Activated CD8-positive, alpha-beta T cell treated with anti-CD3 and anti-CD28 coated beads for 36 hours (primary cell): ENCODE measurements at regions of chr12 and their contacts with region 1.

Region 1: DNA sequence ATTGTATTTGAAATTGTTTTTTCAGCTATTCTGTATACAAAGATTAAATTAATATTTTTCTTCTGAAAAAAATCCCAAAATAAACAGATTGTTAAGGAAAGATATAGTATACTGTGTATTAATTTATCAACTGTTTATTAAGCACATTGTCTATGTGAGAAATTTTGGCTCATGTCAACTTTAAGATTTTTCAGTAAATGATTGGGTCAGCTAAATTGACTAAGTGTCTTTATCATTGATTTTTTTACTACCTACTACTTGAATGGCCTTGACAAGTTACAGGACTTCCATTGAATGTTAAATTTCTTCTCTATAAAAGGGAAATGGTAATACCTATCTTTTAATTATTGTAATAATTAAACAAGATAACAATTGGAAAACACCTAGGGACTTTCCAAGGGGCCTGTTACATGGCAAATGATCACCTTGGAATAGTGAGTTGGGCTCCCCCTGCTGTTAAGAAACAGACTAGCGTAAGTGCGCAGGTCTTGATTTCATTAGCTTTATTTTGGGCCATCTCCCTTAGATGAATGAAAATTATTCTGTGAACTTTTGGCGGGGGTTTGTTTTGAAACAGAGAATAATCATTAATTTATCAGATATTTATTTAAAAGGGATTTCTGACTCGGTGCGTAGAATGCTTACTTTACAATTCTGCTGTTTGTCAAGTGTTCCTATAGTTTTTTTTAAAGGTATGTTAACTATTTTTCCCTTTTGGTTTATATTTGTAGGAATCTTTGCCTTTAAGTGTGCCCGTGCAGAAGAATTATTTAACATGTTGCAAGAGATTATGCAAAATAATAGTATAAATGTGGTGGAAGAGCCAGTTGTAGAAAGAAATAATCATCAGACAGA is 14.5 kb upstream of the CCT2 start:
- DNase-seq: peak; percentile 73
- ATAC-seq: peak; percentile 83
- H3K4me3 Mint-ChIP-seq: no peak overlapping the region
- H3K27ac Mint-ChIP-seq: no peak overlapping the region
- H3K4me1 Mint-ChIP-seq: no peaks in the 10 kb centered on the region
- H3K27me3 Mint-ChIP-seq: no peaks in the 10 kb centered on the region
- CTCF ChIP-seq: peak; percentile 91

Region 2: GRCh38 chr12:69290545-69291277 is 280.1 kb before region 1 on chr12:
- CTCF ChIA-PET with region 1: interaction called, 16 read pairs
- POLR2A ChIA-PET with region 1: interaction called, 3 read pairs
- intact Hi-C with region 1: no loop called
- DNase-seq: peak; percentile 91
- ATAC-seq: peak; percentile 100
- H3K4me3 Mint-ChIP-seq: no peak overlapping the region
- H3K27ac Mint-ChIP-seq: no peak overlapping the region
- H3K4me1 Mint-ChIP-seq: peaks cover 5% of the 10 kb centered on the region
- H3K27me3 Mint-ChIP-seq: peaks cover 24% of the 10 kb centered on the region
- CTCF ChIP-seq: peak; percentile 97

Region 3: DNA sequence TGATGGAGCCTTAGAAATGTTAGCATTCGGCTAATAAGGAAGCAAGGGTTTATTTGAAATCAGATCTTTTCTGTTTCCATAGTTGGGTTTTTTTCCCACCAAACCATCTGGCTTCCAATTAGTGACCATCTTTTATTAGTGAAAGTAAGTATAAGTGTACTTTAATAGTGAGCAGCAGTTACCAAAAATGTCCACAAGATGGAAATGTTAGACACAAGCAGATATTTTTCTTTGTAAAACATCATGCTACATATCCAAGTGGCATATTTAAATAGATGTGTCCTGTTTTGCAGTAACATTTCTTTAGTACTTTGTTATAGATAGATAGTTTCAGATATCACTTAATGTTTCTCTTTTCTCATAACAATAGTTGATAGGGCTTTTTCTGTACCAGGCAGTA is 182.4 kb before region 1 on chr12:
- CTCF ChIA-PET with region 1: interaction called, 40 read pairs
- POLR2A ChIA-PET with region 1: no interaction called
- intact Hi-C with region 1: no loop called
- DNase-seq: no peak
- ATAC-seq: no peak
- H3K4me3 Mint-ChIP-seq: no peak overlapping the region
- H3K27ac Mint-ChIP-seq: no peak overlapping the region
- H3K4me1 Mint-ChIP-seq: peaks cover 8% of the 10 kb centered on the region
- H3K27me3 Mint-ChIP-seq: no peaks in the 10 kb centered on the region
- CTCF ChIP-seq: peak; percentile 25

Region 4: GRCh38 chr12:69484428-69484827 is 86.3 kb before region 1 on chr12:
- CTCF ChIA-PET with region 1: interaction called, 7 read pairs
- POLR2A ChIA-PET with region 1: no interaction called
- intact Hi-C with region 1: loop called (anchors 10 kb)
- DNase-seq: no peak
- ATAC-seq: no peak
- H3K4me3 Mint-ChIP-seq: no peak overlapping the region
- H3K27ac Mint-ChIP-seq: no peak overlapping the region
- H3K4me1 Mint-ChIP-seq: peaks cover 38% of the 10 kb centered on the region
- H3K27me3 Mint-ChIP-seq: no peaks in the 10 kb centered on the region
- CTCF ChIP-seq: no peak

Region 5: GRCh38 chr12:69585189-69586062 is 14.7 kb after region 1 on chr12 and contains the start of gene CCT2:
- CTCF ChIA-PET with region 1: interaction called, 78 read pairs
- POLR2A ChIA-PET with region 1: interaction called, 3 read pairs
- intact Hi-C with region 1: no loop called
- DNase-seq: peak; percentile 98
- ATAC-seq: peak; percentile 95
- H3K4me3 Mint-ChIP-seq: peak within 1 kb of the TSS; percentile 97
- H3K27ac Mint-ChIP-seq: peak within 1 kb of the TSS; percentile 96
- H3K4me1 Mint-ChIP-seq: peaks cover 27% of the 10 kb centered on the region
- H3K27me3 Mint-ChIP-seq: no peaks in the 10 kb centered on the region
- CTCF ChIP-seq: peak; percentile 48
- total RNA-seq, gene CCT2: 389 to 403 TPM

Region 6: DNA sequence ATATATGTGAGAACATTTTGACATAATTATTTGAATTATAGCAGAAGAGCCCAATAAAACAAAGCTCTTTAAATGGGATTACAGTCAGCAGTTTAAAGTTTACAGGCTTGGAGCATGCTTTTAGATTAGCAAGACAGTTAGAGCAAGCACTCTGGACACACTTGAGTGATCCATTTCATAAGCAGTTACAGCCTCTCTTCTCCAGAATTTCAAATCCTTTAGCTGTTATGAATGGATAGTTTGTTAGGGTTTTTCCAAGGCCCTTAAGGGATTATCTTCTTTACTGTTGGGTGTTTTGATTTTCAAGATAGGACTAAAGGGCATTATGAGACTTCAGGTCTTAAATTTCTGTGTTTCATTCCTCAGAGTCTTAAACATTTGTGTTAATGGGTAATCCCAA is 92.0 kb after region 1 on chr12:
- CTCF ChIA-PET with region 1: no interaction called
- POLR2A ChIA-PET with region 1: no interaction called
- intact Hi-C with region 1: no loop called
- DNase-seq: no peak
- ATAC-seq: no peak
- H3K4me3 Mint-ChIP-seq: no peak overlapping the region
- H3K27ac Mint-ChIP-seq: no peak overlapping the region
- H3K4me1 Mint-ChIP-seq: no peaks in the 10 kb centered on the region
- H3K27me3 Mint-ChIP-seq: peaks cover 19% of the 10 kb centered on the region
- CTCF ChIP-seq: no peak